HEK293 (cell line): ENCODE measurements at regions of chr1 and their contacts with region 1.

Region 1: DNA sequence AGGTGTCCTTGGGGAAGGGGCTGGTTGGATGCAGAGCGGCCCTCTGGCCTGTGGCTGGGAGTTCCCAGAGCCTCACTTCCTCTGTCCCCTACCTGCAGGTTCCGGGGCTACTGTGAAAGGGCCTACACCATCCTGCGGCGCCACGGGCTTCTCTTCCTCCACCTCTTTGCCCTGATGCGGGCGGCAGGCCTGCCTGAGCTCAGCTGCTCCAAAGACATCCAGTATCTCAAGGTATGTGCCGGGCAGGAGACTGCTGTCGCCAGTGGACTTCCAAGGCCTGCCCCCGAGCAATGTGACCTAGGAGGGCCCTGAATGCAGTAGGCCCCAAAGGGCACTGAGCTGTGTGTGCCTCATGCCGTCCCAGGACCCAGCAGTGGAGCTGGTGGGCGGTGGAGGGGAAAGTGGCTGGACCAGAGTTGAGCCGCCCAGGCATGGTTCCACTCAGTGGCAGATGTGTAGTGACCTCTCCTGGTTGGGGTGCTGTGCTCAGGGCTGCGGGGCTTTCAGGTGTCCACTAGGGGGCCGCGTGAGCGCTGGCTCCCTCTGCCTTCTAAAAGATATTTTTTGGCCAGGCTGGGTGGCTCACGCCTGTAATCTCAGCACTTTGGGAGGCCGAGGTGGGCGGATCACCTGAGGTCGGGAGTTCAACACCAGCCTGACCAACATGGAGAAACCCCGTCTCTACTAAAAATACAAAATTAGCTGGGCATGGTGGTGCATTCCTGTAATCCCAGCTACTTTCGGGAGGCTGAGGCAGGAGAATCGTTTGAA is 73.4 kb downstream of the PIK3CD start:
- H3K4me3 ChIP-seq: no peak overlapping the region
- H3K27ac ChIP-seq: no peak overlapping the region
- H3K4me1 ChIP-seq: no peaks in the 10 kb centered on the region
- CTCF ChIP-seq: peak; percentile 59

Region 2: DNA sequence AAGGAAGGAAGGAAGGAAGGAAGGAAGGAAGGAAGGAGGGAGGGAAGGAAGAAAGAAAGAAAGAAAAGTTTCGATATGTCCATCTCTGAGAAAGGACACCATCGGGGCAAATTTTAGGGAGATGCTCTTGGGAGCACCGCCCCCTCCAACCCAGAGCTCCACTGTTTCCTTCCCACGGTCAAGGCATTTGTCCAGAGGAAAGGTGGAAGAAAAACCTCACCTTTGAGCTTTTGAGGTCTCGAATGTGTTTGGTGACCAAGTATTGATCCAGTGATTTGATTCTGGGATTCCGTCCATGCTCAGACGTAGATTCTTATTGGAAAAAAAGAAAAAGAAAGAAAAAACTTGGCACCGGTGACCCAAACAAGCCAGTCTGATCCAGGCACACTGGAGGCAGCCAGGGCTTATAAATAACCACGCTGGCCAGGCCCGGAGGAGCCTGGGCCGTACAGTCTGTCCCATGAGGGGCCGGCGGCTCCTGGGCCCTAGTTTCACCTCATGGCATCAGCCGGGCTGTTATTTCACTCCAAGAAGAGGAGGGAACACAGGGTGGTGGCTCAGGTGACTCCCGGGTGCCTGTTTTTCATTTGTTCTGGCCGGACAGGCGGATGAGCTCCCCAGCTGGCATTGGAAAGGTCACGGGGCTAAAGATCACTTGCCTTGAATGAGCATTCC is 221.8 kb before region 1 on chr1:
- CTCF ChIA-PET with region 1: no interaction called
- POLR2A ChIA-PET with region 1: no interaction called
- H3K4me3 ChIP-seq: no peak overlapping the region
- H3K27ac ChIP-seq: no peak overlapping the region
- H3K4me1 ChIP-seq: no peaks in the 10 kb centered on the region
- CTCF ChIP-seq: no peak

Region 3: DNA sequence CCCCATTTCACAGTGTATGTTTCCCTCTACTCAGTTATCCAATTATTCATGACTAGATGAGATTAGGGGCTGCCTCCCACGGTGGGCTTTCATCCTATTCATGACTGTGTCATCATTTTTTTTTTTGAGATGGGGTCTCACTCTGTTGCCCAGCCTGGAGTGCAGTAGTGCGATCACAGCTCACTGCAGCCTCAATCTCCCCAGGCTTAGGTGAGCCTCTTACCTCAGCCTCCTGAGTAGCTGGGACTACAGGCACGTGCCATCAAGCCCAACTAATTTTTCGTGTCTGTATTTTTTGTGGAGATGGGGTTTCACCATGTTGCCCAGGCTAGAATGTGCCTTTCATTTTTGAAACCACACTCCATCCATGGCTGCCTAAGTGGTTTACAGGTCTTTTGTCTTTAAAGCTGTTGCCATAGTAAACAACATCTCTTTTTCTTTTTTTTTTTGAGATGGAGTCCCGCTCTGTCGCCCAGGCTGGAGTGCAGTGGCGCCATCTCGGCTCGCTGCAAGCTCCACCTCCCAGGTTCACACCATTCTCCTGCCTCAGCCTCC is 13.3 kb before region 1 on chr1:
- CTCF ChIA-PET with region 1: interaction called, 22 read pairs
- POLR2A ChIA-PET with region 1: no interaction called
- H3K4me3 ChIP-seq: no peak overlapping the region
- H3K27ac ChIP-seq: no peak overlapping the region
- H3K4me1 ChIP-seq: no peaks in the 10 kb centered on the region
- CTCF ChIP-seq: no peak

Region 4: GRCh38 chr1:9900142-9901043 is 175.5 kb after region 1 on chr1:
- CTCF ChIA-PET with region 1: no interaction called
- POLR2A ChIA-PET with region 1: no interaction called
- H3K4me3 ChIP-seq: no peak overlapping the region
- H3K27ac ChIP-seq: no peak overlapping the region
- H3K4me1 ChIP-seq: no peaks in the 10 kb centered on the region
- CTCF ChIP-seq: no peak